Heart left ventricle (tissue), 16 donors: ENCODE measurements at regions of chr22 and their contacts with region 1.

Region 1: DNA sequence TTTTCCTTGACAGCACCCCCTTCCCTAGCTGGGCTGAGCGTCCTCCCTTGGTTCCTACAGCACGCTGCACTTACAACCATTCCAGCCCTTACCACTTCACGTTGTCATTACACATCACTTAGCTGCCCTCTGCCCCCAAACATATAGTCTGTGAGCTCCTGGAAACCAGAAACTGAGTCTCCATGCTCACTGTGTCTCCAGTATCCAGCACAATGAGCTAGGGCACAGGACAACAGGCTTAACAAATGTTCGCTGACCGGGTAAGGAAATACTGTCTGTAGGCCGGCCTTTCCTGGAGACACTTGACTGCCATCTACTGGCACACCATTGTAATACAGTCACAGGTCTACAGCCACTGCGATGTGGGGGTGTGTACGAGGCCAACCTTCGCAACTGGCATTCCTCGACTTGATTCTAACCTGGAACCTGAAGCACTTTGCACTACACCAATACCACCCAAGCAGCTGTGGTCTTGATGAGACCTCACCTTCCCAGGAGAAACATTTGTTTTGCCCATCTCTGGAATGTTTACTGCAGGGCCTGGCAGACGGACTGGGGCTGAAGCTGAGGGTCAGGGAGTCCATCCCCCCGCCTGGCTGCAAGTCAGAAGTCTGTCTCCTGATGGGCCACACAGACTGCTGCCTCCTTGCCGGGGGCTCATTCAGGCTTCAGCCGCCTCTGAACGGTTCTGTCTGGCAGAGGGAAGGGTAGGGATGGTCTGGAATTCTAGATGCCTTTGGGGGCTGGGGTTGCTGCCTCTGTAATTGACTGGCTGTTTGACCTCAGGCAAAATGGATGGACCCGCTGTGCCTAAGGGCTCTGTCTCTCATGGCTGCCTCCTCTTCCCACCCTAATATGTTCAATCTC is 72.0 kb downstream of the SYN3 start:
- DNase-seq: peak in 4 of 5 donors; percentile 73 to 82 (median 76)
- ATAC-seq: peak; percentile 87 to 99 (median 97)
- H3K4me3 ChIP-seq: no peak overlapping the region
- H3K27ac ChIP-seq: peak overlapping the region in 1 of 12 donors; percentile 35
- H3K4me1 ChIP-seq: peaks cover 0 to 10% (median 3%) of the 10 kb centered on the region in 12 donors
- H3K27me3 ChIP-seq: no peaks in the 10 kb centered on the region
- CTCF ChIP-seq: peak; percentile 84 to 95 (median 92)
- POLR2A ChIP-seq: no peak

Region 2: DNA sequence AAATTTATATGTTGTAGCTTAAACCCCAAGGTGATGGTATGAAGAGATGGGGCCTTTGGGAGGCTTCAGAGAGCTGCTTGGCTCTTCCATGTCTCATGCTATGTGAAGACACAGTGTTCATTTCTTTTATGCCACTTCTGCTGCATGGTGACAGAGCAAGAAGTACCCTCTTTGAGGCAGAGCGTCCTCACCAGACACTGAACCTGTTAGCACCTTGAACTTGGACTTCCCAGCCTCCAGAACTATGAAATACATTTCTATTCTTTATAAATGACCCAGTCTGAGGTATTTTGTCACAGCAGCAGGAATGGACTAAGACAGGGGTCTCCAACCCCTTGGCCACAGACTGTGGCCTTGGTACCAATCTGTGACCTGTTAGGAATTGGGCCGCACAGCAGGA is 331.1 kb before region 1 on chr22:
- intact Hi-C with region 1: loop called in 7 of 10 experiments (anchors 2 to 10 kb)
- DNase-seq: no peak
- ATAC-seq: no peak
- H3K4me3 ChIP-seq: no peak overlapping the region
- H3K27ac ChIP-seq: no peak overlapping the region
- H3K4me1 ChIP-seq: peaks cover 0 to 7% (median 1%) of the 10 kb centered on the region in 12 donors
- H3K27me3 ChIP-seq: no peaks in the 10 kb centered on the region
- CTCF ChIP-seq: no peak
- POLR2A ChIP-seq: no peak

Region 3: GRCh38 chr22:32660292-32660691 is 325.8 kb before region 1 on chr22:
- intact Hi-C with region 1: loop called in 7 of 10 experiments (anchors 2 to 10 kb)
- DNase-seq: peak; percentile 66 to 79 (median 73)
- ATAC-seq: peak in 3 of 4 donors; percentile 64 to 79 (median 78)
- H3K4me3 ChIP-seq: no peak overlapping the region
- H3K27ac ChIP-seq: peak overlapping the region in 3 of 12 donors; percentile 32 to 69 (median 42)
- H3K4me1 ChIP-seq: peaks cover 0 to 27% (median 0%) of the 10 kb centered on the region in 12 donors
- H3K27me3 ChIP-seq: no peaks in the 10 kb centered on the region
- CTCF ChIP-seq: peak; percentile 66 to 88 (median 74)
- POLR2A ChIP-seq: no peak

Region 4: GRCh38 chr22:32803020-32803754 is 182.9 kb before region 1 on chr22:
- intact Hi-C with region 1: loop called in 9 of 10 experiments (anchors 1 to 5 kb)
- DNase-seq: peak in 2 of 5 donors; percentile 54 to 61
- ATAC-seq: peak; percentile 20 to 40 (median 31)
- H3K4me3 ChIP-seq: peak overlapping the region; percentile 64 to 99 (median 94)
- H3K27ac ChIP-seq: peak overlapping the region; percentile 77 to 94 (median 92)
- H3K4me1 ChIP-seq: peaks cover 0 to 68% (median 44%) of the 10 kb centered on the region in 12 donors
- H3K27me3 ChIP-seq: peaks cover 0 to 14% (median 0%) of the 10 kb centered on the region in 9 donors
- CTCF ChIP-seq: no peak
- POLR2A ChIP-seq: no peak

Region 5: DNA sequence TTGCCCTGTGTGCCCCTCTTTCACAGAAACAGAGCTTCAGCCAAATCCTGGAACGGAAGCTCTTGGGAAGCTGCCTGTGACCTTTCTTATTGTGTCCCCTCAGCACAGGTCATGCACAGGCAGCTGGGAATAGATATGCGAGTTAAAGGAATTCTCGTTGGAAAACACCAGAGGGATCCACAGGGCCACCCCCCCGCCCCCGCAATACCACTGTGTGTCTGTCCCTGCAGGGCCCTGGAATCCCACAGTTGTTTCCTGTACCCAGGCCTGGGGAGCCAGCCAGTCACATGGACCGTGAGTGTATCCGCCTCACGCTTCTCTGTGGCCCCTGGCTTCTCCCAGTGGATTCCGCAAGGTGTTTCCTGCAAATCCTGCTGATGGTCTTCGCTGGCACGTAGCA is 155.7 kb before region 1 on chr22:
- intact Hi-C with region 1: loop called in 3 of 10 experiments (anchors 5 to 10 kb)
- DNase-seq: peak; percentile 62 to 80 (median 72)
- ATAC-seq: peak; percentile 60 to 78 (median 63)
- H3K4me3 ChIP-seq: no peak overlapping the region
- H3K27ac ChIP-seq: peak overlapping the region; percentile 51 to 83 (median 70)
- H3K4me1 ChIP-seq: peaks cover 29 to 100% (median 89%) of the 10 kb centered on the region in 12 donors
- H3K27me3 ChIP-seq: no peaks in the 10 kb centered on the region
- CTCF ChIP-seq: no peak
- POLR2A ChIP-seq: no peak

Region 6: GRCh38 chr22:32836280-32837123 is 149.6 kb before region 1 on chr22:
- intact Hi-C with region 1: loop called in 3 of 10 experiments (anchors 5 to 10 kb)
- DNase-seq: no peak
- ATAC-seq: no peak
- H3K4me3 ChIP-seq: no peak overlapping the region
- H3K27ac ChIP-seq: peak overlapping the region in 6 of 12 donors; percentile 1 to 78 (median 23)
- H3K4me1 ChIP-seq: peaks cover 14 to 100% (median 89%) of the 10 kb centered on the region in 12 donors
- H3K27me3 ChIP-seq: no peaks in the 10 kb centered on the region
- CTCF ChIP-seq: peak; percentile 28 to 63 (median 43)
- POLR2A ChIP-seq: no peak

Region 7: DNA sequence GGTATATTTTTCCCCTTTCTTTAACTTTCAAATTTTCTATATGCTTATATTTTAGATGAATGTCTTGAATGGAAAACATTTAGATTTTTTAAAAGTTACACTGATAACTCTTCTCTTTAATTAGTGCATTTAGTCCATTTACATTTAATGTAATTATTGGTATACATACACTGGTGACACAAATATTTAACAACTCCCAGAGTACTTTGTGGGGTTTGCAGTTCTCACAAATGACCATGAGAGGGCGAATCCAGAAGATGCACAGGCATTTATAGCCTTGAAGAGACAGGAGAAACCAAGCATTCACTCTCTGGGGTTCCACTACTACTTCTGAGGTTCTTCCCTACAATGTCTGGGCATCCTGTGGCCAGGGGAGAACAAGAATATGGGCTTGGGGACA is 59.5 kb before region 1 on chr22:
- intact Hi-C with region 1: loop called (anchors 1 to 10 kb)
- DNase-seq: no peak
- ATAC-seq: peak in 2 of 4 donors; percentile 24 to 41
- H3K4me3 ChIP-seq: no peak overlapping the region
- H3K27ac ChIP-seq: no peak overlapping the region
- H3K4me1 ChIP-seq: no peaks in the 10 kb centered on the region
- H3K27me3 ChIP-seq: no peaks in the 10 kb centered on the region
- CTCF ChIP-seq: peak; percentile 55 to 81 (median 64)
- POLR2A ChIP-seq: no peak

Region 8: DNA sequence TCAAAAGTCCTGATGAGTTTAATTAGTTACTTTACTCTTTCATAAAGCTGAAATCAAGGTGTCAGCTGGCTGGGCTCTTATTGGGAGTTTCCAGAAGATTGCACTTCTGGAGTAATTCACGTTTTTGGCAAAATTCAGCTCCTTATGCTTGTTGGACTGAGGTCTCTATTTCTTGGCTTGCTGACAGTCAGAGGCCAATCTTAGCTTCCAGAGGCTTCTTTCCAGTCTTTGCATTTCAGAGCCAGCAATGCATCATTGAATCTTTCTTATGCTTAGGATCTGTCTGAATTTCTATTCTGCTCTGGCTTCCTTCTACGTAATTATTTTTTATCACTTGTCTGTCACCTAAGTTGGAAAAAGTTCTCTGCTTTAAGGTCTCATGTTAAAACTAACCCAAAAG is 163.5 kb after region 1 on chr22:
- intact Hi-C with region 1: no loop called
- DNase-seq: no peak
- ATAC-seq: no peak
- H3K4me3 ChIP-seq: no peak overlapping the region
- H3K27ac ChIP-seq: no peak overlapping the region
- H3K4me1 ChIP-seq: no peaks in the 10 kb centered on the region
- H3K27me3 ChIP-seq: no peaks in the 10 kb centered on the region
- CTCF ChIP-seq: no peak
- POLR2A ChIP-seq: no peak